Panc1 (cell line): ENCODE measurements at regions of chr18 and their contacts with region 1.

Region 1: GRCh38 chr18:21740724-21741510 is at the start of gene MIB1:
- DNase-seq: no peak
- ATAC-seq: peak; percentile 89
- H3K4me3 ChIP-seq: peak within 1 kb of the TSS; percentile 84 to 91
- H3K27ac ChIP-seq: peak within 1 kb of the TSS; percentile 88
- H3K4me1 ChIP-seq: peaks cover 15% of the 10 kb centered on the region
- H3K27me3 ChIP-seq: no peaks in the 10 kb centered on the region
- CTCF ChIP-seq: no peak
- total RNA-seq, gene MIB1: 66.3 TPM

Region 2: GRCh38 chr18:21612125-21612991 is 128.6 kb before region 1 on chr18 and contains the start of gene SNRPD1:
- CTCF ChIA-PET with region 1: interaction called, 8 read pairs
- POLR2A ChIA-PET with region 1: interaction called, 17 read pairs
- in situ Hi-C with region 1: no loop called
- intact Hi-C with region 1: no loop called
- DNase-seq: peak; percentile 64
- ATAC-seq: peak; percentile 99
- H3K4me3 ChIP-seq: peak within 1 kb of the TSS; percentile 85 to 98
- H3K27ac ChIP-seq: peak within 1 kb of the TSS; percentile 97
- H3K4me1 ChIP-seq: peaks cover 9% of the 10 kb centered on the region
- H3K27me3 ChIP-seq: no peaks in the 10 kb centered on the region
- CTCF ChIP-seq: peak; percentile 97
- total RNA-seq, gene SNRPD1: 94.2 TPM

Region 3: GRCh38 chr18:21704603-21705364 is 36.1 kb before region 1 on chr18 and contains the start of gene ABHD3:
- CTCF ChIA-PET with region 1: no interaction called
- POLR2A ChIA-PET with region 1: no interaction called
- in situ Hi-C with region 1: no loop called
- intact Hi-C with region 1: loop called (anchors 5 kb)
- DNase-seq: peak; percentile 38
- ATAC-seq: peak; percentile 99
- H3K4me3 ChIP-seq: peak within 1 kb of the TSS; percentile 51 to 78
- H3K27ac ChIP-seq: peak within 1 kb of the TSS; percentile 82
- H3K4me1 ChIP-seq: peaks cover 10% of the 10 kb centered on the region; the same call in 1 of the 2 replicates
- H3K27me3 ChIP-seq: no peaks in the 10 kb centered on the region
- CTCF ChIP-seq: 0 out of 2 replicates have a peak, but pooled peaks have one; percentile 14
- total RNA-seq, gene ABHD3: 23.3 TPM

Region 4: DNA sequence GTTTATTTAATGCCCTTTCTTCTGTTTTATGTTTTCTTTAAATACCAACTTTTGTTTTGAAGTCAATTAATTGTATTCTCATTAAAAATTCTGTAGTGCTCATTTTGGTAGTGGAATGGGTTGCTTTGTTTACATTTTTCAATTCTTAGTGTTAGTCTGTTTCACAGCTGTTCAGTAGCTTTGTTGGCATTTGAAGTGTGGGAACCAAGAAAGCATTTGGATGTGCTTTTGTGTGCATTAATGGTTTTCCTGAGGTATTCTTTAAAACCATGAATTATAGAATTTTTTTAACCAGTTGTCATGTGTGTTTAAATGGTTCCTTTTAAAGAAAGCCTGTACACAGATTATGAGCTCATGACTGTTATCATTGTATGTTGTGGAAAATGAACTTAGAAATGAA is 19.4 kb after region 1 on chr18:
- CTCF ChIA-PET with region 1: interaction called, 12 read pairs
- POLR2A ChIA-PET with region 1: interaction called, 7 read pairs
- in situ Hi-C with region 1: no loop called
- intact Hi-C with region 1: no loop called
- DNase-seq: no peak
- ATAC-seq: no peak
- H3K4me3 ChIP-seq: no peak overlapping the region
- H3K27ac ChIP-seq: no peak overlapping the region
- H3K4me1 ChIP-seq: peaks cover 11% of the 10 kb centered on the region
- H3K27me3 ChIP-seq: no peaks in the 10 kb centered on the region
- CTCF ChIP-seq: no peak

Region 5: DNA sequence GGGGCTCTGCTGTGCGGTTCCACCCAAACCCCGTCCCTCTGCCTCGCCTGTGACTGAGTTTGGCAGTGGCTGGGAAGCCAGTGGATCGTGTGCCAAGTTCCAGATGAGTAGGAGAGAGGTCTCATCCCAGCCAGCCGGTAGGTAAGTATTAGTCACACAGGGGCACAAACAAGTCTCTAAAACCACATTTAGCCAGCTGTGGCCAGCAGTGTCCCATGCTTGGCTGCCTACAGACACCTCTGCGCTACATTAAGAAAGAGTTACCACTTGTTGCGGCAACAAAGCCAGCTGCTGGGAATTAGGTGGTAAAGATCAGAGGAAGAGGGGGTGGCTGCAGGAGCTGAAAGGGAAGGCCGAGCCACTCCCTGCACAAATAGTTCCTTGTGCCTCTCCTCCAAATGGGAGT is 509.7 kb after region 1 on chr18:
- CTCF ChIA-PET with region 1: no interaction called
- POLR2A ChIA-PET with region 1: interaction called, 10 read pairs
- in situ Hi-C with region 1: no loop called
- intact Hi-C with region 1: no loop called
- DNase-seq: no peak
- ATAC-seq: no peak
- H3K4me3 ChIP-seq: no peak overlapping the region
- H3K27ac ChIP-seq: no peak overlapping the region
- H3K4me1 ChIP-seq: no peaks in the 10 kb centered on the region
- H3K27me3 ChIP-seq: peaks cover 4% of the 10 kb centered on the region; the same call in 1 of the 2 replicates
- CTCF ChIP-seq: no peak

Region 6: DNA sequence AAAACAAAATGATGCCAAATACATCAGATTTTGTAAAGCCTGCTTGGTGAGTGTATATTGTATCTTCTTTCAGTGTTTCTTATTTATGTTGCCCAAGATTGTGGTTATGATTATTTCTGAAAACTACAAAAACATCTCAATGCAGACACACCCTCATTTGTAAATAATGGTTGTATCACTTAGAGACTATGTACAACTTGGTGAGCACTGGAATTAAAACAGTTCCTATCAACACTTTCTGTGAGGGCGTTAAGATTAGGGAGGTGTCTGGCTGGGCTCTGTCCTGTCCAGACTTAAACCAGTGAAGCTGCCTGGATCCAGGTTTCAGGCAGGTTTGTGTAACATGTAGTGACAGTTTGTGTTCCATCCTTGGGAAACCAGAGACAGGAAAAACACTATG is 627.1 kb after region 1 on chr18:
- CTCF ChIA-PET with region 1: no interaction called
- POLR2A ChIA-PET with region 1: interaction called, 10 read pairs
- in situ Hi-C with region 1: no loop called
- intact Hi-C with region 1: no loop called
- DNase-seq: no peak
- ATAC-seq: no peak
- H3K4me3 ChIP-seq: no peak overlapping the region
- H3K27ac ChIP-seq: no peak overlapping the region
- H3K4me1 ChIP-seq: no peaks in the 10 kb centered on the region
- H3K27me3 ChIP-seq: peaks cover 13% of the 10 kb centered on the region
- CTCF ChIP-seq: no peak

Region 7: GRCh38 chr18:22900558-22901238 is 1159.8 kb after region 1 on chr18:
- CTCF ChIA-PET with region 1: no interaction called
- POLR2A ChIA-PET with region 1: no interaction called
- in situ Hi-C with region 1: no loop called
- intact Hi-C with region 1: no loop called
- DNase-seq: no peak
- ATAC-seq: no peak
- H3K4me3 ChIP-seq: no peak overlapping the region
- H3K27ac ChIP-seq: no peak overlapping the region
- H3K4me1 ChIP-seq: no peaks in the 10 kb centered on the region
- H3K27me3 ChIP-seq: no peaks in the 10 kb centered on the region
- CTCF ChIP-seq: no peak